ENCODE measurements at regions of chr2 and their contacts with region 1.

Region 1: GRCh38 chr2:12317814-12318426 is 398.8 kb upstream of the TRIB2 start:
- H3K4me3 ChIP-seq: no peak overlapping the region
- H3K27ac ChIP-seq: peak overlapping the region; percentile 82
- H3K4me1 ChIP-seq: peaks cover 38% of the 10 kb centered on the region
- CTCF ChIP-seq: no peak

Region 2: GRCh38 chr2:12303181-12304030 is 14.5 kb before region 1 on chr2:
- CTCF ChIA-PET with region 1: interaction called, 3 read pairs
- POLR2A ChIA-PET with region 1: interaction called, 12 read pairs
- H3K4me3 ChIP-seq: no peak overlapping the region
- H3K27ac ChIP-seq: peak overlapping the region; percentile 84
- H3K4me1 ChIP-seq: peaks cover 20% of the 10 kb centered on the region
- CTCF ChIP-seq: peak; percentile 21; the same call in 1 of the 2 replicates

Region 3: DNA sequence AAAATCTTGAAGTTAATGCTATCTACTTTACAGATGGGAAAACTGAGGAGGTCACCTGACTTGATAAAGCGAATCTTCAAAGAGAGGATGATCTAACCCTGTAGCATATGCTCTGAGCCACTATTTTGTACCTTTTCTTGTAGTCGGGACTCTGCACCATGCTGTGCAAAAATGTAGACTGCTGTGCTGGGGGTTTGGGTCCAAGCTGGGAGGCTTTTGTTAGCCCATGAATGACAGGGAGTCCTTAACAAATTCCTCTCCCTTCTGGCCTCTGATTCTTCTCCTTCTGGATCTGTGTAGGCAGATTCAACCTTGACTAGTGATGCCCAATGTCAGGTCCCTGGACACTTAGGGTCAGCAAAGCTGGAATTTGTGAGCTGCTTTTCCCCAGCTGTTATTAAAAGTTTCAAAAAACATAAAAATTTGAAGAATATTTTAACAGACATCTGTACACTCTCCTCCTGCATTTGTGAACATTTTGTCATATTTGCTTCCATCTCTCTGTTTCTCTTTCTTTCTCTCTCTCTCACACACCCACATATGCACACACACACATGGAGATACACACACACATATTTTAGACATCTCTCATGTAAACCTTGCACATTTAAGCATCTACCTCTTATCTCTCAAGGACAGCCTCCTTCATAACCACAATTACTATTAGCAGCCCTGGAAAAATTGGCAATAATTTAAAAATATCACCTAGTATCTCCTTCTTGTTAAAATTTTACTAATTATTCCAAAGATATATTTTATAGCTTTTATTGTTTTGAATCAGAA is 63.8 kb after region 1 on chr2:
- CTCF ChIA-PET with region 1: no interaction called
- POLR2A ChIA-PET with region 1: no interaction called
- H3K4me3 ChIP-seq: no peak overlapping the region
- H3K27ac ChIP-seq: no peak overlapping the region
- H3K4me1 ChIP-seq: no peaks in the 10 kb centered on the region
- CTCF ChIP-seq: no peak

Measured in HEK293 (cell line).